MCF 10A (cell line): ENCODE measurements at regions of chr11 and their contacts with region 1.

Region 1: DNA sequence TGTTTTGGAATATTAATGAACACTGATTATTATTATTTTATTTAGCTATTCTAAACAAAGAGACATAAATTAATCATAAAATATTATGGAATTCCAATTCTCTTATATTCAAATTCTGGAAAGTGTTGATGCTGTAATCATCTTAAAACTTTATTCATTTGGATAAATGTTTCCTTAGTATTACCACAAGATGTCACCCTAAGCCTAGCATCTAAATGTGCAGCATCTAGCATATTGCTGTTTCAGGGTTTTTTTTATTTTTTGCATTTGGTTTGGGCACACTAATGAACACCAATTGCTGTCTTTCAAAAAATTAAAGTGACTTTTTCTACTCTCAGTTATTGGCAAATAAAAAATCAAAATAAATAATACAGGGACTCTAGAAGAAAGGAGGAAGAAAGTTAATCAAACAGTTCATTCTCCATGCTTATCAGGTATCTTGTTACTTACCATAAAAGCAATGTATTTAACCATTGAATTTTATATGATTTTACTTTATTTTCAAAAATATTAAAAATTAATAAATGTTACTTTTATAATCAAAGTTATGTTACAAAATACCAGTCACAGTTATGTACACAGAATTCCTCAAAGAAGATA is 31.8 kb downstream of the DLG2 start:
- DNase-seq: peak; percentile 56
- H3K4me3 Mint-ChIP-seq: no peak overlapping the region
- H3K27ac Mint-ChIP-seq: no peak overlapping the region
- H3K4me1 Mint-ChIP-seq: no peaks in the 10 kb centered on the region
- H3K27me3 Mint-ChIP-seq: peaks cover 18% of the 10 kb centered on the region
- CTCF ChIP-seq: peak; percentile 56

Region 2: GRCh38 chr11:84558085-84558905 is 1037.1 kb before region 1 on chr11:
- CTCF ChIA-PET with region 1: no interaction called
- POLR2A ChIA-PET with region 1: no interaction called
- intact Hi-C with region 1: loop called (anchors 2 kb)
- DNase-seq: peak; percentile 57
- H3K4me3 Mint-ChIP-seq: no peak overlapping the region
- H3K27ac Mint-ChIP-seq: no peak overlapping the region
- H3K4me1 Mint-ChIP-seq: no peaks in the 10 kb centered on the region
- H3K27me3 Mint-ChIP-seq: peaks cover 52% of the 10 kb centered on the region
- CTCF ChIP-seq: peak; percentile 80

Region 3: DNA sequence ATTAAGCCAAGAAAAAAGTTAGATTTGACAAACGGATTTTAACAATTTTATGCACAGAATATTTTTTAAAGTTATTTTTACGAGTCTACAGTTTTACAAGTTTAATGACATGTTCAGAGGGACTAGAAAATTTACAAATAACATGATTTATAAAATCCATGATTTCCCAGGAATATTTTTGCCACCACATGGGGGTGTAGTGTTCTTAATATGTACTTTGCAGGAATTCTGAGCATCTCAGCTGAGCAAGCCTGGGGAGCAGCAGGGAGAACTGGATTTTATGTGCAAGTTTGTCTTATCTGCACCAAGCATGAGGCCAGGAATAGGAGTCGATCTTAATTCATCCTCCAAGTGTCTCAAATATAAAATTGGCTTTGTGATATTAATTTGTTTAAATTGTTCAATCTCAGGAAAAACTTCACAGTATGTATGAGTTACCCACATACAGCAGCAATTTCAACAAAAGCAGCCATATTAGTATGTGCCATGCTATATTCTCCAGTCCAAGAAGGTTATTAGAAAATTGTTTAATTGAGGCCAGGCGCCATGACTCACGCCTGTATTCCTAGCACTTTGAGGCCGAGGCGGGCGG is 794.5 kb before region 1 on chr11:
- CTCF ChIA-PET with region 1: interaction called, 3 read pairs
- POLR2A ChIA-PET with region 1: no interaction called
- intact Hi-C with region 1: loop called (anchors 1 kb)
- DNase-seq: peak; percentile 27
- H3K4me3 Mint-ChIP-seq: no peak overlapping the region
- H3K27ac Mint-ChIP-seq: no peak overlapping the region
- H3K4me1 Mint-ChIP-seq: no peaks in the 10 kb centered on the region
- H3K27me3 Mint-ChIP-seq: peaks cover 12% of the 10 kb centered on the region
- CTCF ChIP-seq: peak; percentile 51

Region 4: DNA sequence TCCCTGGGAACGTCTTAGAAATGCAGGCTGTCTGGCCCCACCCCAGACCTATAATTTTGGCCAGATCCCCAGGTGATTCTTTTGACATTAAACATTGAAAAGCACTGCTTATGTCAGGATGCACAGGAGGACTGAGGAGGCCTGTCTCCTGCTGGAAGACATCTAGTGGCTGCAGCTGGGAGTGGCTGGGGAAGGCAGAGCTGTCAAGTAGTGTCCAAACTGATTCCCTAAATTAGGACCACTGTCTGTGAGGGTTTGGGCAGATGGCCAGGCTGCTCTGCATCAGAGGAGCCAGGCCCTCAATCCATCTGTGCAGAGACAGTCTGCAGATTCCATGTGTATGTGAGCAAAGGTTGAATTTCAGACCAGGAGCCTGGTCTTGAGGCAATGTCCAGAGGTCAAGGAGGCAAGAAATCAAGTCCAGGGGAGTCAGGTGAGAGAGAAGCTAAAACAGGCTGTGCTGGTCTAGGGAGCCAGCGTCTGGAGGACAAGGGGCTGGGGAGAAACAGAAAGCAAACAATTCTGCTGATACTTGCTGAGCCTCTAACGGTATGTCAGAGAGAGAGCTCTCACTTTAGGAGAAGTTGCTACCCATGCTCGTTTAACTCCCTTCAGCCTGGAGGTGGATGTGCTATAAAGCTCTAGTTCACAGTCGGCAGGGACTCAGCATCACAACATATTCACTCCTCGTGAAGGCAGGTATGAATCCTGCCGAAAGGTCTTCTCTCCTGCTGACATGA is 230.9 kb after region 1 on chr11:
- CTCF ChIA-PET with region 1: interaction called, 3 read pairs
- POLR2A ChIA-PET with region 1: no interaction called
- intact Hi-C with region 1: loop called (anchors 2 kb)
- DNase-seq: peak; percentile 44
- H3K4me3 Mint-ChIP-seq: no peak overlapping the region
- H3K27ac Mint-ChIP-seq: peak overlapping the region; percentile 92
- H3K4me1 Mint-ChIP-seq: peaks cover 31% of the 10 kb centered on the region
- H3K27me3 Mint-ChIP-seq: no peaks in the 10 kb centered on the region
- CTCF ChIP-seq: peak; percentile 42

Region 5: DNA sequence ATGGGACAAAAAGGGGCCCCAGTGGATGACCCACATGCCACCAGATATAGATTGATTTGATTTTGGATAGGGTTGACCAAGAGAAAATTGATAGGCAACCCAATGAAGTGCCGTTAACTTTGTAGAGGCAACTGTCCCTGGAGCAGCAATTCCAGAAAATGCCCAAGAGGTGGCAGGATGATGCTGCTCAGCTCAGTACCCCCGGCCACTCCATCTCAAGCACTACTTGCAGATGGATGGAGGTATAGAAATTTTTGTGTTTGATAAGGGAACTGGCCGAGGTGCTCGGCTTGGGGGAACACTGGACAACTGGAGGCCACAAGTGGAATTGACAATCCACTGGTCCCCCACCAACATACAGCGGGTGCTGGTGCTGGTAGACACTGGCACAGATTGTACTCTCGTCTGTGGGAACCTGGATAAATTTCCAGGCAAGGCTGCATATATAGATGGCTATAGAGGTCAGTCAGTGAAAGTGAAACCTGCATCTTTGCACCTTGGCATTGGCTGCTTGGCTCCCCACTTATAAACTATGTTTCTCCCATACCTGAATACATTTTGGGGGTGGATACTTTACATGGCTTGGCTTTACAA is 346.1 kb after region 1 on chr11:
- CTCF ChIA-PET with region 1: no interaction called
- POLR2A ChIA-PET with region 1: no interaction called
- intact Hi-C with region 1: loop called (anchors 10 kb)
- DNase-seq: peak; percentile 64
- H3K4me3 Mint-ChIP-seq: no peak overlapping the region
- H3K27ac Mint-ChIP-seq: no peak overlapping the region
- H3K4me1 Mint-ChIP-seq: peaks cover 1% of the 10 kb centered on the region
- H3K27me3 Mint-ChIP-seq: no peaks in the 10 kb centered on the region
- CTCF ChIP-seq: peak; percentile 57

Region 6: DNA sequence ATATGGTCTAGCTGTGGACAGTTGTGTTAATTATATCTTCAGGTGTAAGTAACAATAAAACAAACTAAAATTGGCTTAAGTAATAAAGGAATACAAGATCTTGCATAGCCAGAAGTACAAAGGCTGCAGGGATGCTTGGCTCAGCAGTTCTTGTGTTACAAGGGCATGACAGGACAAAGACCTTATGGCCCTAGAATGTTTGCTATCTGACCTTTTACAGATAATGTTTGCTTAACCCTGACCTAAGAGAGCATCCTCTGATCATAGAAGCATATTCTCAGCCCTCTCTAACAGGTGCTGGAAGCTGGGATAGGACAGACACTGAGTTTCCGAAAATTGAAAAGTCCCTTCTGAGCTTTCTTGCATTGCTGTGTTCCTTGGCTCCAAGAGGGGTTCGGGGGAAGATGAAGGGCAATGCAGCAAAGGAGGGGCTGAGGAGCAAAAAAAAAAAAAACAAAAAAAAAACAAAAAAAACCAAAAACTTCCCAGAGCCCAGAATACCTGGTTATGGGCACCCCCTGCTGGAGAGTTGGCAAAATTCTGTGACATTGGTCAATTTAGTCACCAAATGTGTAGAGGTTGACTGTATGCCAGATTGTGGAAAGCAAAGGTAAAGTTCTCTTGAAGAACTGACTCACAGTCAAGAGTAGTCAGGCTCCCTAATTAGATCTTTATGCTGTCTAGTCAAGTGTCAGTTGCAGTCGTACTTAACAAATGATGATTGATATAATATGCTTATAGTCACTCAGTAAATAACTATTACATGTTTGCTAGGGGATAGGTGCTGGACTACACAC is 696.3 kb after region 1 on chr11:
- CTCF ChIA-PET with region 1: interaction called, 3 read pairs
- POLR2A ChIA-PET with region 1: no interaction called
- intact Hi-C with region 1: loop called (anchors 5 kb)
- DNase-seq: peak; percentile 77
- H3K4me3 Mint-ChIP-seq: no peak overlapping the region
- H3K27ac Mint-ChIP-seq: no peak overlapping the region
- H3K4me1 Mint-ChIP-seq: peaks cover 6% of the 10 kb centered on the region
- H3K27me3 Mint-ChIP-seq: no peaks in the 10 kb centered on the region
- CTCF ChIP-seq: peak; percentile 78